Naive thymus-derived CD4-positive, alpha-beta T cell (primary cell): ENCODE measurements at regions of chr11 and their contacts with region 1.

Region 1: DNA sequence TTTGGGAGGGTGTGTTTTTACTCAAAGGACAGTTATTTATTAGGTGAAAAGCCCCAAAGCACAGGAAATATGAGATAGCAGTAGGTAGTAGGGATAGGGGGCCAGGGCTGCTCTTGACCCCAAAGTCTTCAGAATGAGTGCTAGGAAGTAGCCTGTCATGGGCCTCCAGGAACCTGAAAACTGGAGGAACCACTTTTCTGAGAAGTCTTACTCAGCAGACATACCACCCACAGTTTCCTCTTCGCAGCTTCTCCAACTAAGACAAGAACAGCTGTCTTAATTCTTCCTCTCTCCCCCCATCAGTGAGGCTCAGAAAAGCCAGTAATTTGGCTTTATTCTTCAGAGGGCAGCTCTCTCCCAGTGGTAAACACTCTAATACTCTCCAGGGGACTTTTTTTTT is 84.0 kb upstream of the CTSC start:
- DNase-seq: peak in 1 of 9 donors; percentile 41
- ATAC-seq: peak; percentile 66
- H3K4me3 ChIP-seq: no peak overlapping the region
- H3K4me3 Mint-ChIP-seq: peak overlapping the region in 3 of 10 donors; percentile 2 to 80 (median 53)
- H3K27ac ChIP-seq: no peak overlapping the region
- H3K27ac Mint-ChIP-seq: peak overlapping the region in 3 of 9 donors; percentile 46 to 89 (median 55)
- H3K4me1 ChIP-seq: peaks cover 17 to 21% of the 10 kb centered on the region in 2 donors
- H3K4me1 Mint-ChIP-seq: peaks cover 26 to 77% (median 34%) of the 10 kb centered on the region in 7 donors
- H3K27me3 ChIP-seq: no peaks in the 10 kb centered on the region
- H3K27me3 Mint-ChIP-seq: no peaks in the 10 kb centered on the region

Region 2: GRCh38 chr11:86515297-86516094 is 1906.0 kb before region 1 on chr11:
- CTCF ChIA-PET with region 1: no interaction called
- POLR2A ChIA-PET with region 1: no interaction called
- intact Hi-C with region 1: no loop called
- DNase-seq: no peak
- ATAC-seq: no peak
- H3K4me3 ChIP-seq: no peak overlapping the region
- H3K4me3 Mint-ChIP-seq: no peak overlapping the region
- H3K27ac ChIP-seq: no peak overlapping the region
- H3K27ac Mint-ChIP-seq: no peak overlapping the region
- H3K4me1 ChIP-seq: no peaks in the 10 kb centered on the region
- H3K4me1 Mint-ChIP-seq: peaks cover 0 to 2% (median 0%) of the 10 kb centered on the region in 7 donors
- H3K27me3 ChIP-seq: no peaks in the 10 kb centered on the region
- H3K27me3 Mint-ChIP-seq: no peaks in the 10 kb centered on the region

Region 3: DNA sequence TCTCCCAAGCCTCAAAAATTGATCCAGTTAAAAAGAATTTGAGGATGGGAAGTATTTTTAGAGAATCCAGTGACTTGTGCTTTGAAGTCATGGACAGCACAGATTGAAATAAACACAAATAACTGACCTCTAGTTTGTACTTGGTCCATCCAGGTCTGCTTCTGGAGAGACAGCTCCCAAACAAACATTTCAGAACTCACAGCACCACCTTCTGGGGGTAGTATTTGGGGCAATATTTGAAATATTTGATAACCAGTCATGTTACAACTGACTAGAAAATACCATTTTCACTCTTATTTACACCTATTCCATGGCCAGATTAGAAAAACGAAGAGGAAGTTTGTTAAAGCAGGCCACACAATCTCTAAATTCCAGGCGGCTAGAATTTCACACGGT is 140.2 kb before region 1 on chr11:
- CTCF ChIA-PET with region 1: no interaction called
- POLR2A ChIA-PET with region 1: no interaction called
- intact Hi-C with region 1: loop called in 1 of 2 experiments (anchors 5 kb)
- DNase-seq: no peak
- ATAC-seq: no peak
- H3K4me3 ChIP-seq: no peak overlapping the region
- H3K4me3 Mint-ChIP-seq: no peak overlapping the region
- H3K27ac ChIP-seq: no peak overlapping the region
- H3K27ac Mint-ChIP-seq: no peak overlapping the region
- H3K4me1 ChIP-seq: no peaks in the 10 kb centered on the region
- H3K4me1 Mint-ChIP-seq: peaks cover 0 to 2% (median 0%) of the 10 kb centered on the region in 7 donors
- H3K27me3 ChIP-seq: no peaks in the 10 kb centered on the region
- H3K27me3 Mint-ChIP-seq: no peaks in the 10 kb centered on the region

Region 4: GRCh38 chr11:88402192-88402715 is 19.3 kb before region 1 on chr11:
- CTCF ChIA-PET with region 1: no interaction called
- POLR2A ChIA-PET with region 1: no interaction called
- intact Hi-C with region 1: loop called in 1 of 2 experiments (anchors 2 kb)
- DNase-seq: no peak
- ATAC-seq: peak; percentile 52
- H3K4me3 ChIP-seq: no peak overlapping the region
- H3K4me3 Mint-ChIP-seq: no peak overlapping the region
- H3K27ac ChIP-seq: no peak overlapping the region
- H3K27ac Mint-ChIP-seq: no peak overlapping the region
- H3K4me1 ChIP-seq: peaks cover 0 to 3% of the 10 kb centered on the region in 2 donors
- H3K4me1 Mint-ChIP-seq: peaks cover 0 to 51% (median 18%) of the 10 kb centered on the region in 7 donors
- H3K27me3 ChIP-seq: no peaks in the 10 kb centered on the region
- H3K27me3 Mint-ChIP-seq: no peaks in the 10 kb centered on the region